ENCODE measurements at regions of chr6 and their contacts with region 1.

Region 1: DNA sequence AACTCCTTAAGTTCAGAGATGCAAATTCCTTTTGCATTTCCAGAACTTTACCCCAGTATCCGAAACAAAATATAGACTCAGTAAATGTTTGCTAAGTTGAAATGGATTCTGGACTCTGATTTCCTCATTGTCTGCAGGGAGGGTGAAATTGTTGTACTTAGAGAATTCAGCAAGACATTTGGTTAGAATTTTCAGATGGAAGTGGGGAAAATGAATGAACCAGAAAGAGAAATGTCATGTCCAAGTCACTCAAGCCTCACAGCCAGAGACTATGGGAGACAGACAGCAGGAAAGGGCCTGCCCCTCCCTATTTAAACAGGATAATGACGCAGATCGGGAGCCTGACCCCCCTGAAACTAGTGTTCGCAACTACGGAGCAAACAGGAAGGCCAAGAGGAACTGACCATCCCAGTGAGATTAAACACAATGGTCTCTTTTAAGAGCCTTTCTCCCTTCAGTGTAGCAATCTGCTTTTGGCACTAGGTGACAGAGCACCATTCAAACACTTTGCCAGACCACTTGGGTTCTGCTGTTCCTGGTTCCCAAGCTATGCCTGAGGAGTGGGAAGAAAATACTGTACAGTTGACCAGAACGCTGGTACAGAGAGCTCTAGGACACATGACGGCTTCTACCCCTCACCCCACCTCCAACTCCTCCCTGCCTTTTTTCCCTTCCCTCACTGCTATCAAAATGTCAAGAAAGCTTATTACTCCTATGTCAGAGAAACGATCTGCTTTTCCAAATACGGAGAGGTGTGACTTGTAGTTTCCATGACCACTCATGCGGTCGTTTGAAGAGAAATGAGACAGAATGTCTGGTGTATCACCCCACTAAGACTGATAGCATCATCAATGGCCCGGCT is 13.7 kb downstream of the NEDD9 start:
- DNase-seq: no peak
- ATAC-seq: no peak
- H3K4me3 Mint-ChIP-seq: no peak overlapping the region
- H3K27ac Mint-ChIP-seq: peak overlapping the region; percentile 11
- H3K4me1 Mint-ChIP-seq: peaks cover 66% of the 10 kb centered on the region
- H3K27me3 Mint-ChIP-seq: no peaks in the 10 kb centered on the region

Region 2: GRCh38 chr6:11207199-11207968 is 11.4 kb before region 1 on chr6:
- POLR2A ChIA-PET with region 1: interaction called, 59 read pairs
- DNase-seq: no peak
- ATAC-seq: no peak
- H3K4me3 Mint-ChIP-seq: no peak overlapping the region
- H3K27ac Mint-ChIP-seq: peak overlapping the region; percentile 78
- H3K4me1 Mint-ChIP-seq: peaks cover 78% of the 10 kb centered on the region
- H3K27me3 Mint-ChIP-seq: no peaks in the 10 kb centered on the region

Region 3: DNA sequence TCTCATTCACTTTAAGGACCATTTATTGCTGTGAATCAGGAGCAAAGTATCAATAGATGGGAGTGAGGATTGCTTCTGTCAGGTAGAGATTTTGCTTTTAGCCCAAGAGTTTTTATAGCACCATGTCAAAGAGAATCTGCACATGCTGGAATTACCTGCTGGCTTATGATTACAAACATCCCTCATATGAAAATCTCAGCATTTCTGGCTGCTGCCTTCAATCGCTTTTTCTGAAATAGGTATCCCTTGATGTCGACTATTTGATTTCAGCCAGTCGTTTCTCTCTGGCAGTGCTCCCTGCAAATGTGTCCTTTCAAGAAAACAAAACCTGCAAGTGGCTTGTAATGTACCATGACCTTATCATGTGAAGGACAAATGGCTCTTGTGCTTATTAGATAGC is 48.2 kb after region 1 on chr6:
- POLR2A ChIA-PET with region 1: no interaction called
- DNase-seq: no peak
- ATAC-seq: no peak
- H3K4me3 Mint-ChIP-seq: no peak overlapping the region
- H3K27ac Mint-ChIP-seq: no peak overlapping the region
- H3K4me1 Mint-ChIP-seq: peaks cover 22% of the 10 kb centered on the region
- H3K27me3 Mint-ChIP-seq: no peaks in the 10 kb centered on the region